Right ventricle myocardium inferior (tissue), 1 donor: ENCODE measurements at regions of chr9 and their contacts with region 1.

Region 1: GRCh38 chr9:137781906-137782585 is 95.5 kb upstream of the CACNA1B start:
- DNase-seq: no peak
- ATAC-seq: no peak

Region 2: DNA sequence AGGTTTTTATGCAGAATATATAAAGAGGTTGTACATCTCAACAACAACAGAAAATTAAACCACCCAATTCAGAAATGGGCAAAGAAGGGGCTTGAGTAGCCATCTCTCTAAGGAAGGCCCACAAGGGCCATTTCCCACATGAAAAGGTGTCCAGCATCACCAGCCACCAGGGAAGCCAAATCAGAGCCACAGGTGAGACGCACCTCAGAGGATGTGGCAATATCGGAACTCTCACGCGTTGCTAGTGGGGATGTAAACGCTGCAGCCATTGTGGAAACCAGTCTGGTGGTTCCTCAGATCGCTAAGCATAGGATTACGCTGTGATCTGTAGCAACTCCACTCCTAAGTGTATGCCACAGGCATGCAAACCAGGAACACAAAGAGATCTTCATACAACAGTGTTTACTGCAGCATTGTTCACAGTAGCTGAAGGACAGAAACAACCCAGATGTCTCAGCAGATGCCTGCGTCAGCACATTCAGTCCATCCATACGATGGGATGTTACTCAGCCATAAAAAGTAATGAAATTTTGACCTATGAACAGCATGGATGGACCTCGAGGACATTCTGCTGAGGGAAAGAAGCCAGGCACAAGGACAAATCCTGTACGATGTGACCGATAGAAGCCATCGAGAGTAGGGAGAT is 11.3 kb after region 1 on chr9:
- intact Hi-C with region 1: loop called (anchors 1 kb)
- DNase-seq: no peak
- ATAC-seq: no peak